Naive thymus-derived CD4-positive, alpha-beta T cell (primary cell): ENCODE measurements at regions of chr1 and their contacts with region 1.

Region 1: DNA sequence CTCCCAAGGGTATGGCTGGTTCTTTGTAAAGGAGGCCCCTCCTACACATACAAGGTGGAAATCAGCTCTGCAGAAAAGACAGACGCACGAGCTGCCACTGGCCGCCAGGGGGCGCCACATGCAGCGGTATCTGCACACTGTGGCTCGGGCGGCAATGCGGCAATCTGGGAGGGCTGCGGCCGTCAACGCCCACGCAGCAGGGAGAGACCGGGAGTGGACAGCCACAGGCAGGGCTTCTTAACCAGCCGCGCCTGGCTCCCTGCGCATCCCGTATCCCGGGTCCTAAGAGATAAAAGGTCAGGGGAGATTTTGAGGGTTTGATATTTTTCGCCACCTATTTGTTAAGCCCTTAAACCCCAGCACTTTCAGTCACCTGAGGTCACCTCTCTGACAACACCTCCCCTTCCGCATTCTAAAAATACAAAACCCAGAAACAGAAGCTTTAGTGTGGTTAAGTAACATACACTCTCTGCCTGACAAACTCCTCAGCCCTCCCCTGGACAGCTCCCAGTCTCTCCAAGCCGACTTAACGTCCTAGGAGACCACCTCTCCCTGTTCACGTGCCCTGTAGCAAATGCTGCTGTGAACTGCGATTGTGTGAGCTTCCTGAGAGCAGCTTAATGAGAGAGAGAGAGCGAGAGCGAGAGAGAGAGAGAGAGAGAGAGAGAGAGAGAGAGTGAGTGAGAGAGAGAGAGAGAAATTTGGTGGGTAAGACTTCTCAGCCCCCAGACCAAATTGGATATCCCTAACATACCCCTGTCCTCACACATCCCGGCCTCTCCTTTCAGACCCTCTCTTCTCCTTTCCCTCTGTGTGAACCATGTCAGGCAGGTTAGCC is 13.5 kb upstream of the KCNA2 start:
- DNase-seq: peak; percentile 84 to 96 (median 92)
- ATAC-seq: peak; percentile 95
- H3K4me3 ChIP-seq: peak overlapping the region; percentile 58
- H3K4me3 Mint-ChIP-seq: peak overlapping the region; percentile 81 to 96 (median 90)
- H3K27ac ChIP-seq: peak overlapping the region; percentile 54
- H3K27ac Mint-ChIP-seq: peak overlapping the region; percentile 89 to 95 (median 93)
- H3K4me1 ChIP-seq: peaks cover 16 to 30% of the 10 kb centered on the region in 2 donors
- H3K4me1 Mint-ChIP-seq: peaks cover 32 to 54% (median 42%) of the 10 kb centered on the region in 7 donors
- H3K27me3 ChIP-seq: no peaks in the 10 kb centered on the region
- H3K27me3 Mint-ChIP-seq: peaks cover 0 to 4% (median 0%) of the 10 kb centered on the region in 5 donors

Region 2: GRCh38 chr1:110196917-110197765 is 422.5 kb before region 1 on chr1:
- CTCF ChIA-PET with region 1: no interaction called
- POLR2A ChIA-PET with region 1: no interaction called
- intact Hi-C with region 1: loop called (anchors 5 kb)
- DNase-seq: peak; percentile 34 to 77 (median 57)
- ATAC-seq: peak; percentile 91
- H3K4me3 ChIP-seq: no peak overlapping the region
- H3K4me3 Mint-ChIP-seq: no peak overlapping the region
- H3K27ac ChIP-seq: no peak overlapping the region
- H3K27ac Mint-ChIP-seq: no peak overlapping the region
- H3K4me1 ChIP-seq: no peaks in the 10 kb centered on the region
- H3K4me1 Mint-ChIP-seq: peaks cover 0 to 6% (median 0%) of the 10 kb centered on the region in 7 donors
- H3K27me3 ChIP-seq: no peaks in the 10 kb centered on the region
- H3K27me3 Mint-ChIP-seq: no peaks in the 10 kb centered on the region

Region 3: GRCh38 chr1:110524311-110525251 is 95.0 kb before region 1 on chr1:
- CTCF ChIA-PET with region 1: interaction called, 5 read pairs
- POLR2A ChIA-PET with region 1: no interaction called
- intact Hi-C with region 1: loop called (anchors 1 kb)
- DNase-seq: peak in 8 of 9 donors; percentile 15 to 47 (median 35)
- ATAC-seq: peak; percentile 74
- H3K4me3 ChIP-seq: no peak overlapping the region
- H3K4me3 Mint-ChIP-seq: peak overlapping the region in 2 of 10 donors; percentile 15 to 39
- H3K27ac ChIP-seq: no peak overlapping the region
- H3K27ac Mint-ChIP-seq: no peak overlapping the region
- H3K4me1 ChIP-seq: no peaks in the 10 kb centered on the region
- H3K4me1 Mint-ChIP-seq: peaks cover 0 to 7% (median 4%) of the 10 kb centered on the region in 7 donors
- H3K27me3 ChIP-seq: no peaks in the 10 kb centered on the region
- H3K27me3 Mint-ChIP-seq: peaks cover 21 to 51% (median 25%) of the 10 kb centered on the region in 5 donors

Region 4: GRCh38 chr1:110630839-110631663 is 11.4 kb after region 1 on chr1:
- CTCF ChIA-PET with region 1: interaction called, 13 read pairs
- POLR2A ChIA-PET with region 1: interaction called, 22 read pairs
- intact Hi-C with region 1: loop called (anchors 1 kb)
- DNase-seq: peak; percentile 74 to 87 (median 84)
- ATAC-seq: peak; percentile 87
- H3K4me3 ChIP-seq: peak overlapping the region; percentile 50
- H3K4me3 Mint-ChIP-seq: no peak overlapping the region
- H3K27ac ChIP-seq: peak overlapping the region; percentile 57
- H3K27ac Mint-ChIP-seq: no peak overlapping the region
- H3K4me1 ChIP-seq: peaks cover 58 to 59% of the 10 kb centered on the region in 2 donors
- H3K4me1 Mint-ChIP-seq: peaks cover 38 to 62% (median 52%) of the 10 kb centered on the region in 7 donors
- H3K27me3 ChIP-seq: no peaks in the 10 kb centered on the region
- H3K27me3 Mint-ChIP-seq: no peaks in the 10 kb centered on the region

Region 5: DNA sequence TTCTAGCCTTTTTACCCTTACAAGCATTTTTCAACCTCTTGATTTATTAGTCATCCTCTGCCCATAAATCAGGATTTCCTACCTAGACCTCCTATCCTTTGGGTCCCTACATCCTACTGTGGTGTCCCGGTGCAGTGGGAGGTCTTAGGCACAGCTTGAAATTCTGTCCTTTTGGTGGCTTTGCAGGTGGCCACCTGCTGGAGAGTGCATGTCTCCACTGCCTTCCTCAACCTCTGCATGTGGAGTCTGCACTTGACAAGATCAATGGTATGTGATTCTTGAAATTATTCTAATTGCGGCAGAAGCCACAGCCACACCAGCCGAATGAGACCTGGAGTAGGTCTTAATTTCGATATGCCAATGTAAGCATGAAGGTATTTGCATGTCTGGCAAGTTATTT is 66.6 kb after region 1 on chr1:
- CTCF ChIA-PET with region 1: interaction called, 10 read pairs
- POLR2A ChIA-PET with region 1: interaction called, 6 read pairs
- intact Hi-C with region 1: loop called in 1 of 2 experiments (anchors 1 kb)
- DNase-seq: peak in 7 of 9 donors; percentile 15 to 47 (median 28)
- ATAC-seq: peak; percentile 62
- H3K4me3 ChIP-seq: no peak overlapping the region
- H3K4me3 Mint-ChIP-seq: no peak overlapping the region
- H3K27ac ChIP-seq: no peak overlapping the region
- H3K27ac Mint-ChIP-seq: peak overlapping the region in 4 of 9 donors; percentile 2 to 60 (median 44)
- H3K4me1 ChIP-seq: no peaks in the 10 kb centered on the region
- H3K4me1 Mint-ChIP-seq: peaks cover 0 to 11% (median 5%) of the 10 kb centered on the region in 7 donors
- H3K27me3 ChIP-seq: no peaks in the 10 kb centered on the region
- H3K27me3 Mint-ChIP-seq: peaks cover 0 to 13% (median 0%) of the 10 kb centered on the region in 5 donors

Region 6: GRCh38 chr1:110829955-110830553 is 210.4 kb after region 1 on chr1:
- CTCF ChIA-PET with region 1: interaction called, 10 read pairs
- POLR2A ChIA-PET with region 1: interaction called, 3 read pairs
- intact Hi-C with region 1: loop called in 1 of 2 experiments (anchors 1 kb)
- DNase-seq: peak in 7 of 9 donors; percentile 20 to 61 (median 54)
- ATAC-seq: peak; percentile 93
- H3K4me3 ChIP-seq: no peak overlapping the region
- H3K4me3 Mint-ChIP-seq: no peak overlapping the region
- H3K27ac ChIP-seq: no peak overlapping the region
- H3K27ac Mint-ChIP-seq: peak overlapping the region in 1 of 9 donors; percentile 14
- H3K4me1 ChIP-seq: no peaks in the 10 kb centered on the region
- H3K4me1 Mint-ChIP-seq: peaks cover 6 to 33% (median 13%) of the 10 kb centered on the region in 7 donors
- H3K27me3 ChIP-seq: no peaks in the 10 kb centered on the region
- H3K27me3 Mint-ChIP-seq: peaks cover 0 to 49% (median 2%) of the 10 kb centered on the region in 5 donors